A549 (cell line): ENCODE measurements at regions of chr2 and their contacts with region 1.

Region 1: DNA sequence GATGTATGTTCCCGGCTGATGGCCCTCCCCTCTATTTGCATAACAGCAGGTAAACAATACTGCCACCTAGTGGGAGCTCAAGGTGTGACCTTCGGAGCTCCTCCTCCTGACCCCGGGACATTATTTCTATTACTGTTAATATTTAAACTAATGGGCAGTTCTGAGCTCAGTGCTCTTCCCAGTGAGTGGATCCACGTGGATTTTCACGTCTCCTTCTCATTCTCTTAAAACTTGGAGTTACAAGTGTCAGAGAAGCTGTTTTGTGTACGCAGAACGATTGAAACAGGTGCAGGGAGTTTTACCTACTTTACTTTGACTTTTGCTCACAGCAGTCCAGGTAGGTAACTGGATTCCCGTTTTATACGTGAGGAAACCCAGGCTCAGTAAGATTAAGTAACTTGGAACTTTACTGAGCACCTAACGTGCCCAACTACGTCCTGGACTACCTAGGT is 127.3 kb downstream of the PRKCE start:
- DNase-seq: peak; percentile 77 to 83
- ATAC-seq: peak; percentile 70 to 88; a peak in 5 of 6 replicates
- H3K4me3 ChIP-seq: no peak overlapping the region
- H3K27ac ChIP-seq: no peak overlapping the region
- H3K4me1 ChIP-seq: 0 out of 3 replicates have a peak, but pooled peaks cover 3% of the 10 kb centered on the region
- CTCF ChIP-seq: peak; percentile 70
- EP300 ChIP-seq: no peak
- POLR2A ChIP-seq: no peak
- RAD21 ChIP-seq: peak; percentile 48 to 60

Region 2: DNA sequence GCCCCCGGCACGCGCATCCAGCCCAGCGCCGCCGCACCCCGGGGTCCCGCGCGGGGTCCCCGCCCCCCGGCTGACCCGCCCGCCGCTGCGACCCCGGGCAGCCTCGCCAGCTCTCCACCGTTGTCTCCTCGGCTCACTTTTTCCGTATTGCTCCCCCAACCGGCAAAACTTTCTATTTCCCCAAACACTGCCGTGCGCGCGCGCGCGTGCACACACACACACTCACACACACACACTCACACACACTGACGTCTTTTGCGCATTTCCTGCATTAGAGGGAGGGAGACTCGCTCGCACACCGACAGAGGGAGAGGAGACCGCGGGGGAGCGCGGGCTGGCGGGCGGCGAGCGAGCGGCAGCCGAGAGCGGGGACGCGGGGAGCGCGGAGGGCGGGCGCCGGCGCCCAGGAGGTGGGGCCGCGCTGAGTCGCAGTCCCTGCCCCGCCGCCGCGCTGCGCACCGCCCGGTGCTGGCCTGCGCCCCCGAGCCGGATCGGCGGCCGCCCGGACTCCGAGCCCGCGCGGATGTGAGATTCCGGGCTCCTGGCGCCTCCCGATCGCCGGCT is 127.8 kb before region 1 on chr2:
- CTCF ChIA-PET with region 1: interaction called, 11 read pairs
- POLR2A ChIA-PET with region 1: no interaction called
- DNase-seq: peak; percentile 72 to 97
- ATAC-seq: peak; percentile 84 to 86
- H3K4me3 ChIP-seq: peak overlapping the region; percentile 83
- H3K27ac ChIP-seq: peak overlapping the region; percentile 86 to 90
- H3K4me1 ChIP-seq: peaks cover 23% of the 10 kb centered on the region
- CTCF ChIP-seq: peak; percentile 58
- EP300 ChIP-seq: peak in 1 of 2 experiments; percentile 18; a peak in 1 of 5 replicates
- POLR2A ChIP-seq: peak; percentile 74
- RAD21 ChIP-seq: peak; percentile 20 to 54; a peak in 3 of 5 replicates

Region 3: DNA sequence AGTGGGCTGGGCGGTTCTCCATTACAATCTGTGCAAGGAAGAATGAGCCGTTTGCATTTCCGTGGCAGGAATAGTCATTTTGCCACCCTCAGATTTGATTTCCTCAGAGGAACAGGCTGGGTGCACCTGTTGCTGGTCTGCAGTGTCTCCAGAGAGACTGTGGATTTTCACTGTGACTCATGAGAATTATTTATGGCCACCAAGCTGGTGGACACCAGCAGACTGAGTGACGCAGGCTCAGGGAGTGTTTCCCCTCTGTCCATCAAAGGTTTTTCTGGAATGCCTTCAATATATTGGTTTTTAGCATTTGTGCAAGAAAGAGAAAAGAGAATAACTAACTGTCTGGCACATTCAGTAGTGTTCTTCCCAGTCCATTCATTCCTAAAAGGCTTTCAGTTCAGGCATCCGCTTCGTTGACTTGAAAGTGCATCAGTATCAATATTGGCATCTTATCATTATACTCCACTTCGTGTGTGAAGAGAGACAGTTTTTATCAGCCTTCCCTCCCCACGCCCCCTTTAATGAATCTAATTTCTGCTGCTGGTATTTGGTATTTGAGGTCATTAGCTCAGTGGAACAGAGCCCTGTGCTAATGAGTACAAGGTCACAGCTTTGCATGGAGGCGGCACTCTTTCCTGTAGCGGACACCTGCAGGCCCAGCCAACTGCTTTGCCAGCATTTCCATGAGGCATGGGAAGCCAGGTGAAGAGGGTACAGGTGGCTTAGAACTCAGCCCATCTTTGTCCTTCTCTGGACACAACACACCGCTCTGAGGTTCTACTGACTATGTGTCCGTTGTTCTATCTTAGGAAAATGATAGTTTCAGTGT is 87.4 kb before region 1 on chr2:
- CTCF ChIA-PET with region 1: no interaction called
- POLR2A ChIA-PET with region 1: no interaction called
- DNase-seq: no peak
- ATAC-seq: no peak
- H3K4me3 ChIP-seq: no peak overlapping the region
- H3K27ac ChIP-seq: no peak overlapping the region
- H3K4me1 ChIP-seq: no peaks in the 10 kb centered on the region
- CTCF ChIP-seq: no peak
- EP300 ChIP-seq: no peak
- POLR2A ChIP-seq: no peak
- RAD21 ChIP-seq: no peak

Region 4: GRCh38 chr2:45794134-45794617 is 15.4 kb after region 1 on chr2:
- CTCF ChIA-PET with region 1: interaction called, 60 read pairs
- POLR2A ChIA-PET with region 1: no interaction called
- DNase-seq: no peak
- ATAC-seq: no peak
- H3K4me3 ChIP-seq: no peak overlapping the region
- H3K27ac ChIP-seq: no peak overlapping the region
- H3K4me1 ChIP-seq: no peaks in the 10 kb centered on the region
- CTCF ChIP-seq: no peak
- EP300 ChIP-seq: no peak
- POLR2A ChIP-seq: no peak
- RAD21 ChIP-seq: no peak

Region 5: DNA sequence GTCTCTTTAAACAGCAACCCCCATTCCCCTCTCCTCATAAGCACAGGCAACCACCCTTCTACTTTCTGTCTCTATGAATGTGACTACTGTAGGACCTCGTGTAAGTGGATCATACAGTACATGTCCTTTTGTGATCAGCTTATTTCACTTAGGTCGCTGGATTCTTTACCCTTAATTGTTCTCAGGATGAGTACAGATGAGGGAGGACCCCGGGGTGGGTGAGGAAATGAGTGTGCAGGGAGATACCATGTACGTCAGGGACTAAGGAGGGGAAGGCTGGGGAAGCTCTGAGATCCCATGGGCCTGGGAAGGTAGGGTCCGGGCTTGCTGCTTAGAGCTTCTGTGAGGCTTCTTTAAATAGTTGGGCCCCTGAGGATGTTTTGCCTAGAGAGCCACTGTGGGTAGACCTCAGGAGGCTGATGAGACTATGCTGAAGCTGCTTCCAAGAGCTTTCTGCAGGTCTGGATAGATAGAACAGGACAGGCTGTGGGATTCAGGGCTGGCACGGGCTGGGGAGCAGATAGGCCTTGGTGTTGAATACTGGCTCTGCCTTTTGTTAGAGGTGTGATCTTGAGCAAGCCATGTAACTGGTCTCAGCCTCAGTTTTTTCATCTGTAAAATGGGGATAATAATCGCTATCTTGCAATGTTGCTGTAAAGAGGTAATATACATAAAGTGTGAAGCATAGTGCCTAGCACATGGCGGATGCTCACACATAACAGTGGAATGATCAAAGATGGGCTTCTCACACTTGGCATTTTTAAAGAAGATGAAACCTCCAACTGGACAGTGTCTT is 28.0 kb after region 1 on chr2:
- CTCF ChIA-PET with region 1: interaction called, 16 read pairs
- POLR2A ChIA-PET with region 1: no interaction called
- DNase-seq: no peak
- ATAC-seq: no peak
- H3K4me3 ChIP-seq: no peak overlapping the region
- H3K27ac ChIP-seq: no peak overlapping the region
- H3K4me1 ChIP-seq: no peaks in the 10 kb centered on the region
- CTCF ChIP-seq: no peak
- EP300 ChIP-seq: no peak
- POLR2A ChIP-seq: no peak
- RAD21 ChIP-seq: no peak

Region 6: DNA sequence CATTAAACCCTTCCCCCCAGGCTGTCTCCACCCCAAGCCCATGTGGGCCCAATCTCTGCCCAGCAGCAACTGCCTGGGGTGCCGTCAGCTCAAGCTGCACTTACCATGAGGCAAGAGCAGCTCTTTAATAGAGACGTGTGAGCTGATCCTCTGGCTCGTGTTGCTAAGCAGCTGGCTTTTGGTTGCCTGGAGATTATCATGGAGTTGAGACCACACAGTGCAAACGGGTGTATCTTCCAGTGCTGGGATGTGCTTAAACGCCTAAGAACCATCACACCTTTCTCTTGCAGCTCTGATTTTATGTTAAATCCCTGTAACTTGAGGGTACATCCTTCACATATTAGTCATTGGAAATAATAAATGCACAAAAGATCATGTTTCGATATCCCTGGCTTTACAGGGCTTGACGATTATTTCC is 143.8 kb after region 1 on chr2:
- CTCF ChIA-PET with region 1: no interaction called
- POLR2A ChIA-PET with region 1: no interaction called
- DNase-seq: no peak
- ATAC-seq: no peak
- H3K4me3 ChIP-seq: no peak overlapping the region
- H3K27ac ChIP-seq: no peak overlapping the region
- H3K4me1 ChIP-seq: no peaks in the 10 kb centered on the region
- CTCF ChIP-seq: no peak
- EP300 ChIP-seq: no peak
- POLR2A ChIP-seq: no peak
- RAD21 ChIP-seq: no peak